Uterus (tissue), 4 donors: ENCODE measurements at regions of chr5 and their contacts with region 1.

Region 1: DNA sequence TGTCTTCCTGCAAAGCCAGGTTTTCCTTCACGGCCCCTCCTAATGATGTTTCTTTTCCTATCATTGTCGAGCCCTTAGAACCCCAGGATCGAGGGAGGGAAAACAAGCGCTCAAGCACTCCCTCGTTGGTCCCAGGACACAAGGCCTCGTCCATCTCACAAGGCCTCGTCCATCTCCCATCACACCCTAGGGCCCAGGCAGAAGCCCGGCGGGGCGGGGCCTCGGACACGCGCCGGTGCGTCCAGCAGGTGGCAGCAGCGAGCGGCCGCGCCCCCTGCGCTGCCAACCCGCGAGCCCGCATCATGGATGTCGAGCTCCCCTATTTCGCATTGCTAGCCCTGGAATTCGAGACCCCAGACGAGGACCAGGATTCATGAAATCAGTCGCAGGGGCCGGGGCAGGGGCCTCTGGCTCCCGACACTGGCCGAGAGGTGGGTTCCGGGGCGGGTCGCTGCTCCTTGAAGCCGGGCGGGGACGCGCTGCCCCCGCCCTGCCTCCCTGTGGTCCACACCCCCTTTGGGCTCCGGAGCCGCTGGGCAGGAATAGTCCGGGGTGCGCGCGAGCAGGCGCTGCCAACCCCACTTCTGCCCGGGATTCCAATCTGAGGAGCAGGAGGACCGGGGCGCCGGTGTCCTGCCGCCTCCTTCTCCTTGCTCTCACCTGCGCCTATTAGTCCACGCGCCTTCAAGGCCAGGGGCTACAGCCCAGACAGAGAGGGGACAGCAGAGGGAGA is at the start of gene ABLIM3:
- DNase-seq: peak; percentile 53 to 79
- H3K4me3 ChIP-seq: peak within 1 kb of the TSS; percentile 58 to 65
- H3K27ac ChIP-seq: peak within 1 kb of the TSS; percentile 78 to 87
- H3K4me1 ChIP-seq: peaks cover 7 to 12% of the 10 kb centered on the region in 2 donors
- H3K27me3 ChIP-seq: no peaks in the 10 kb centered on the region
- CTCF ChIP-seq: peak; percentile 81 to 94 (median 86)
- POLR2A ChIP-seq: peak in 1 of 2 donors; percentile 25
- total RNA-seq, gene ABLIM3: 2.6 to 49.5 (median 6.9) TPM

Region 2: DNA sequence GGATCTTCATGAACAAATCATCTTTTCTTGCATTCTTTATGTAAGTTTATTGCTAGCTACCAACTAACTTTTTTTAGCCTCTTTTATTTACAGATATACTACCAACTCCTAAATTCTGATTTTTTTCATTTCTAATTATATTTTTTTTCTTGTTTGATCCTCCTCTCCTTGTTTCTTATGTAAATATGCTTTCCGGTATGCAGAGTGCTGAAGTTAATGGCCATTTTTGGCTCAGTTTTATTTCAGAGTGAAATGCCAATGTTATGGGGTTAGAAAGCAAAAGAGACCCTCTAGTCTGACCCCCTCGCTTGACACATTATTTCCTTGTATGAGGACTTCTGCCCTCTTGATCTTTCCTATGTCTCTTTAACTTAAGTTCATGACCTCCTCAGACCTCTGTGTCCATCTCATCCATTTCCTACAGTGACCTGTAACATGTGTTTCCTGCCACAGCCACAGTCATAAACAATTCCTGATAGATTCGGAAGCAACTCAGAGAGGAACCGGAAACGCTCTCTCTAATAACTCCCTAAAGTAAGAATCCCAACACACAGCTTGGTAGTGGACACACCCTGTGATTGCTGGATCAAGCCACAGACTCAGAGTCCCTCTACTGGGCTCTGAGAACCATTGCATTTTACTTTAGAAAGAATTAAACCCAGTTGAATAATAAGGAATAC is 87.4 kb after region 1 on chr5:
- intact Hi-C with region 1: loop called (anchors 5 kb)
- DNase-seq: peak; percentile 34 to 68
- H3K4me3 ChIP-seq: no peak overlapping the region
- H3K27ac ChIP-seq: peak overlapping the region; percentile 38 to 58
- H3K4me1 ChIP-seq: peaks cover 0 to 4% of the 10 kb centered on the region in 2 donors
- H3K27me3 ChIP-seq: no peaks in the 10 kb centered on the region
- CTCF ChIP-seq: peak; percentile 73 to 85 (median 78)
- POLR2A ChIP-seq: no peak